ENCODE measurements at regions of chr20 and their contacts with region 1.

Region 1: DNA sequence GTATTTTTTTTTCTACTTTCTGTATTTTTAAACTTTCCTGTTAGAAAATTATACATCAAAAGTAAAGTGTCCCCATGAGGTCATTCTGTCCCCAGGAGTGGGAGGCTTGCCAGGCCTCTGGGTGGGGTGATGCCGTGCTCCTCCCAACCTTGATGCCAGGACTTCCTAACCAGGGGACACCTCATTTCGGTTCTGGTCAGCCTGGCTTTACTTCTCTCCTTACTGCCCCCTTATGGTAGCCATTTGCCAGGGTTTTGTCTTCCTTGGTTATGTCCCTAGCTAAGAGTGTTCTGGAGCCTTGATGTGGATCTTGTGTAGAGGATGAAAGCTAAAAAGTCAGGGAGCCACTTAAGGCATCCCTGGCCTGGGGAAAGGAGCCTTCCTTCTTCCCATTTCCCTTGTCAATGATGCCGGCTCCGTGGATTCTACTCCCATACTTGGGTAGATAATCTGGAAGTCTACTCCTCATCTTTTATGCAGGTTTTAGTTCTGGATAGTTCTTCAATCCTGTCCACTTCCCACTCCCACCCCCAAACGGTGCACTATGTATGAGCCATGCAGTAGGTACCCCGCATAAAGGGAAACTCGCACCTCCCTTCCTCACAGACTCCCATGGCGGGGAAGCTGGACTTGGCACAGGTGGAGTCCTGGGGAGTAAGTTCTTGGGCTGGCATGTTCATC is 164.1 kb upstream of the SALL4 start:
- DNase-seq: peak; percentile 71 to 86
- ATAC-seq: peak; percentile 99
- H3K4me3 ChIP-seq: no peak overlapping the region
- H3K27ac ChIP-seq: peak overlapping the region in 1 of 2 experiments; percentile 55; a peak in 4 of 6 replicates
- H3K4me1 ChIP-seq: peaks cover 8% of the 10 kb centered on the region; the same call in 1 of the 3 replicates
- CTCF ChIP-seq: peak; percentile 69
- EP300 ChIP-seq: no peak
- POLR2A ChIP-seq: no peak
- RAD21 ChIP-seq: peak; percentile 72 to 77

Region 2: DNA sequence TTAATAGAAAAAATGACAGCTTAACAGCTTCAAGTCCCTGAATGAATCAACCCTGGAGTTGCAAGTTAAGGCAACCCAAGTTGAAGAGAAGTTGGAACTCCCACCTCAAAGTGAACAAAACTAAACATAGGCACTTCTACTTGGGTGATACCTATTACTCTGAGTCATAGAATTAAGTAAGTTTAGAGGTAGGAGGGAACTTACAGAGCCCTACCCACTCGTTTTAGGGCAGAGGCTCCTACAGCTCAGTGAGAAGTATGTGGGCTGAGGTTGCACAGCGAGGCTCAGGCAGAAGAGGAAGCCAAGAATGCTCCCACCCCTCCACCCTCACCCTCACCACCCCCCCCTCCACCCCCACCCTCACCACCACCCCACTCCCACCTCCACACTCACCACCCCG is 466.1 kb before region 1 on chr20:
- CTCF ChIA-PET with region 1: no interaction called
- POLR2A ChIA-PET with region 1: no interaction called
- DNase-seq: no peak
- ATAC-seq: peak in 1 of 2 experiments; percentile 44; a peak in 1 of 6 replicates
- H3K4me3 ChIP-seq: no peak overlapping the region
- H3K27ac ChIP-seq: no peak overlapping the region
- H3K4me1 ChIP-seq: peaks cover 6% of the 10 kb centered on the region; the same call in 2 of the 3 replicates
- CTCF ChIP-seq: no peak
- EP300 ChIP-seq: no peak
- POLR2A ChIP-seq: no peak
- RAD21 ChIP-seq: no peak

Region 3: GRCh38 chr20:51732096-51732791 is 234.2 kb before region 1 on chr20:
- CTCF ChIA-PET with region 1: no interaction called
- POLR2A ChIA-PET with region 1: no interaction called
- DNase-seq: no peak
- ATAC-seq: no peak
- H3K4me3 ChIP-seq: no peak overlapping the region
- H3K27ac ChIP-seq: 0 out of 6 replicates have a peak overlapping the region, but pooled peaks of 1 of the 2 experiments have one; percentile 20
- H3K4me1 ChIP-seq: peaks cover 19% of the 10 kb centered on the region
- CTCF ChIP-seq: no peak
- EP300 ChIP-seq: no peak
- POLR2A ChIP-seq: no peak
- RAD21 ChIP-seq: no peak

Region 4: GRCh38 chr20:51946586-51946985 is 19.8 kb before region 1 on chr20:
- CTCF ChIA-PET with region 1: interaction called, 12 read pairs
- POLR2A ChIA-PET with region 1: no interaction called
- DNase-seq: no peak
- ATAC-seq: no peak
- H3K4me3 ChIP-seq: no peak overlapping the region
- H3K27ac ChIP-seq: no peak overlapping the region
- H3K4me1 ChIP-seq: no peaks in the 10 kb centered on the region
- CTCF ChIP-seq: no peak
- EP300 ChIP-seq: no peak
- POLR2A ChIP-seq: no peak
- RAD21 ChIP-seq: no peak

Region 5: DNA sequence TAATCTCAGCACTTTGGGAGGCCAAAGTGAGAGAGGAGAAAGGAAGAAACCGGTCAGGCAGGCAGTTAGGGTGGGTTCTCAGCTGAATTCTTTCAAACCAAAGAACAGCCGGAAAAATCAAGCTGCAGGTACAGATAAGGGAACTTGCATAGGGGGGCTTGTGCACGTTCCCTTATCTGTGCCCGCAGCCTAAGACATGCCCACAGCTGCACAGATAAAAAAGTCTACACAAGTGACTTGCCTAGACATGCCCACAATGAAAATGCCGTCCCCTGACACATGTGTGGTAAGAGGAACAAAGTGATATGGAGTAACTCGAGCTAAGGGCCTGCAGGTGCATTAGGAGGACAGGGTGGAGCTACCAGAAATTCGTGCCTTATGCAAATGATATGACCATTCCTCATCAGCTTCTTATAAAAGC is 11.7 kb after region 1 on chr20:
- CTCF ChIA-PET with region 1: interaction called, 22 read pairs
- POLR2A ChIA-PET with region 1: no interaction called
- DNase-seq: no peak
- ATAC-seq: no peak
- H3K4me3 ChIP-seq: no peak overlapping the region
- H3K27ac ChIP-seq: no peak overlapping the region
- H3K4me1 ChIP-seq: no peaks in the 10 kb centered on the region
- CTCF ChIP-seq: no peak
- EP300 ChIP-seq: no peak
- POLR2A ChIP-seq: no peak
- RAD21 ChIP-seq: no peak

Measured in A549 (cell line).